T-cell (primary cell): ENCODE measurements at regions of chr1 and their contacts with region 1.

Region 1: GRCh38 chr1:38964140-38964548 is 22.5 kb upstream of the RHBDL2 start:
- DNase-seq: peak in 10 of 35 experiments; percentile 0 to 25 (median 4)
- ATAC-seq: peak; percentile 40 to 63 (median 62)
- H3K4me3 ChIP-seq: no peak overlapping the region
- H3K4me3 Mint-ChIP-seq: no peak overlapping the region
- H3K27ac ChIP-seq: no peak overlapping the region
- H3K27ac Mint-ChIP-seq: peak overlapping the region in 1 of 2 donors; percentile 54
- H3K4me1 ChIP-seq: no peaks in the 10 kb centered on the region
- H3K4me1 Mint-ChIP-seq: peaks cover 6 to 13% (median 6%) of the 10 kb centered on the region in 3 donors
- H3K27me3 ChIP-seq: no peaks in the 10 kb centered on the region
- H3K27me3 Mint-ChIP-seq: no peaks in the 10 kb centered on the region

Region 2: DNA sequence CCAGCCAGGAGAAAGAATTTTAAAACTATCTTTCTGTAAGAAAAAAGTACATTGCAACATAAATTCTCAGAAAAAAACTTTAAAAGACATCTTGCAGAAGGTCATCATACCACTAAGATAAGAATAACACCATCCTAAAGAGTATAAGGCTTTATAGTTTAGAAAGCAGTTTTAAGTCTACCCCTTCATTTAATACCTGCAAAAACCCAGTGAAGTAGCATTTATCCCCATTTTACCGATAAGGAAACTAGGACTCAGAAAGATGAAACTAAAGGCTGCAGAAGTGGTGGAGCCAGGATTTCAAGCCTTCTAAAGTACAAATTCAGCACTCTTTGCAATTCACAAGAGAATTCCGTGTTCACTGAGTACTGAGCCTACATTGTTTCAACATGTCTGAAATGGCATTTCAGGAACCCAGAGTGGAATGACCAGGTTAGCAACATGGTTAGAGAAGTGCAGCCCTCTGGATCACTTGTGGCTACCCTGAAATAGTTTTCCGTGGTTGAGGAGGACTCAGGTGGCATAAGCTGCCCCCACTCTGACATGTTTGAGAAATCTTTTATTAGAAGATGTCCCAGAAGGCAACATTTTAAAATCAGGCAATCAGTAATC is 930.8 kb after region 1 on chr1:
- CTCF ChIA-PET with region 1: no interaction called
- POLR2A ChIA-PET with region 1: interaction called in 1 of 2 experiments, 10 read pairs
- DNase-seq: no peak
- ATAC-seq: no peak
- H3K4me3 ChIP-seq: no peak overlapping the region
- H3K4me3 Mint-ChIP-seq: no peak overlapping the region
- H3K27ac ChIP-seq: no peak overlapping the region
- H3K27ac Mint-ChIP-seq: no peak overlapping the region
- H3K4me1 ChIP-seq: no peaks in the 10 kb centered on the region
- H3K4me1 Mint-ChIP-seq: no peaks in the 10 kb centered on the region
- H3K27me3 ChIP-seq: peaks cover 9 to 48% of the 10 kb centered on the region in 2 experiments
- H3K27me3 Mint-ChIP-seq: peaks cover 37 to 47% of the 10 kb centered on the region in 2 donors